ENCODE measurements at regions of chr10 and their contacts with region 1.

Region 1: DNA sequence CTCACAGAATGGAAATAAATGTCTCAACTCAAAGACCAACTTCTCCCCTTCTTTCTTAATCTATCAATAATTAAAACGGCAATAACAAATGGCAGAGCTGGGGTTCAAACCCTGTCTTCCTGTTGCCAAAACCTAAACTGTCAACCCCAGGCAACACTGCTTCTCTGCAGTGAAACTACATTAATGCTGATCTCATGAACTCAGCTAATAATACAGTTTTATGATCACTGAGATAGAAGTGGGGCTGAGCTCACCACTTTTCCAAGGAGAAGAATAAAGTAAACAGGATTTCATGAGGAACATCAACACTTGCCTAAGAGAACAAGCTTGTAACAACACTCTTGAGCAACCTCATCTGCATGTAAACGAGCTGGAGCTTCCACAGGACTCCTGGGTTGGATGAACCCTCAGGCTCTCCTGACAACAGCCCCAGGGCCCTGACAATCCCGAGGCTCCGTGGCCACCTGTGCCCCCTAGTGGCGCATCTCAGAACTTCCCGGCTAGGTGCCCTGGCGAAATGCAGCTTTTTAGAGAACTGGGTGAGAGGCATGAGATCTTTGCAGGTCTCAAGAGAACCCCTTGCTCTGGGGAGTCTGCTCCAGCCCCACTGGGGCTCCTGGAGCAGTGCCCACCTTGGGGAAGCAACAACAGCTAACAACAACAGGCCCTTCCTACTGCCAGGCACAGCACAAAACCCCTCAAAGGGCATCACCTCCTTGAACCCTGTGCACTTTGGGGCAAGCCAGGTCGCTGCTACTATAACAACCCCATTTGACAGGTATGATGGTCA is 169.3 kb downstream of the SH3PXD2A start:
- DNase-seq: peak; percentile 66 to 78 (median 71)
- H3K4me3 ChIP-seq: no peak overlapping the region
- H3K4me3 Mint-ChIP-seq: peak overlapping the region in 1 of 8 donors; percentile 61
- H3K27ac ChIP-seq: no peak overlapping the region
- H3K27ac Mint-ChIP-seq: peak overlapping the region in 5 of 7 donors; percentile 30 to 84 (median 74)
- H3K4me1 ChIP-seq: peaks cover under 1% of the 10 kb centered on the region
- H3K4me1 Mint-ChIP-seq: peaks cover 3 to 20% (median 5%) of the 10 kb centered on the region in 4 donors
- H3K27me3 ChIP-seq: no peaks in the 10 kb centered on the region
- H3K27me3 Mint-ChIP-seq: no peaks in the 10 kb centered on the region

Region 2: GRCh38 chr10:103542764-103543616 is 143.1 kb before region 1 on chr10:
- CTCF ChIA-PET with region 1: no interaction called
- POLR2A ChIA-PET with region 1: no interaction called
- intact Hi-C with region 1: loop called (anchors 5 kb)
- DNase-seq: peak; percentile 16 to 51 (median 25)
- H3K4me3 ChIP-seq: peak overlapping the region in 1 of 2 donors; percentile 23
- H3K4me3 Mint-ChIP-seq: peak overlapping the region; percentile 75 to 91 (median 85)
- H3K27ac ChIP-seq: no peak overlapping the region
- H3K27ac Mint-ChIP-seq: peak overlapping the region in 3 of 7 donors; percentile 3 to 36 (median 25)
- H3K4me1 ChIP-seq: peaks cover 9% of the 10 kb centered on the region
- H3K4me1 Mint-ChIP-seq: peaks cover 3 to 17% (median 8%) of the 10 kb centered on the region in 4 donors
- H3K27me3 ChIP-seq: peaks cover 5% of the 10 kb centered on the region
- H3K27me3 Mint-ChIP-seq: peaks cover 10 to 11% of the 10 kb centered on the region in 2 donors

Region 3: GRCh38 chr10:103605359-103606095 is 80.5 kb before region 1 on chr10:
- CTCF ChIA-PET with region 1: interaction called, 103 read pairs
- POLR2A ChIA-PET with region 1: no interaction called
- intact Hi-C with region 1: no loop called
- DNase-seq: peak; percentile 26 to 53 (median 44)
- H3K4me3 ChIP-seq: no peak overlapping the region
- H3K4me3 Mint-ChIP-seq: no peak overlapping the region
- H3K27ac ChIP-seq: no peak overlapping the region
- H3K27ac Mint-ChIP-seq: peak overlapping the region in 1 of 7 donors; percentile 57
- H3K4me1 ChIP-seq: no peaks in the 10 kb centered on the region
- H3K4me1 Mint-ChIP-seq: no peaks in the 10 kb centered on the region
- H3K27me3 ChIP-seq: no peaks in the 10 kb centered on the region
- H3K27me3 Mint-ChIP-seq: no peaks in the 10 kb centered on the region

Region 4: GRCh38 chr10:103648921-103649532 is 37.0 kb before region 1 on chr10:
- CTCF ChIA-PET with region 1: interaction called, 13 read pairs
- POLR2A ChIA-PET with region 1: no interaction called
- intact Hi-C with region 1: no loop called
- DNase-seq: no peak
- H3K4me3 ChIP-seq: no peak overlapping the region
- H3K4me3 Mint-ChIP-seq: no peak overlapping the region
- H3K27ac ChIP-seq: no peak overlapping the region
- H3K27ac Mint-ChIP-seq: no peak overlapping the region
- H3K4me1 ChIP-seq: no peaks in the 10 kb centered on the region
- H3K4me1 Mint-ChIP-seq: peaks cover 0 to 18% (median under 1%) of the 10 kb centered on the region in 4 donors
- H3K27me3 ChIP-seq: no peaks in the 10 kb centered on the region
- H3K27me3 Mint-ChIP-seq: no peaks in the 10 kb centered on the region

Region 5: DNA sequence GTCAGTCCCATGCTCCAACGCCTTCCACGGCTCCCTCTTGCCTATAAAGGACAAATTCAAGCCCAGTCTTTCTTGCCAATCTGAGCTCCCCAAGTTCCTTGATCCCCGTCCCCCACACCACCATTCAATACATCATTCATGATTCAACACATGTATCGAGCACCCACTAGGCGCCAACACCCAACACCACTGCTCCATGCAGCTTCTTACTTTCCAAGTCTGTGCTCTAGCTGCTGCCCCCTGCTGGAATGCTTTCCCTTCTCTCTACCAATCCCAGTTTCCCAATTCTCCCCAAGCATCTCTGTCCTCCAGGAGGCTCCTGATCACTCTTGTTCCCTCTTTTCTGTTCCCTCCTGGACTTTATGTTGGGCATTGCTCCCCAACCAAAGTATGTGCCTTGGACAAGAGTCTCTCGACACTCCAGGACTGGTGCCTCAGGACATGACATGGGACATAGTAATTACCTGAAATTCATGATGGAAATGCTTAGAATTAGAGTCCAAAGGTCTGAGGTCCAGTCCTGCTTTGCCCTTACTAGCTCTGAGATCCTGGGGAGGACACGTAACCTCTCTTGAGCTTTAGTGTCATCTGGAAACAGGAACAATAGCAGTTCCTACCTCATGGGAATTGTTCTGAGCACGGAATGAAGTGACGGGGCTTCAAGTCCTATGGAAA is 19.9 kb before region 1 on chr10:
- CTCF ChIA-PET with region 1: interaction called, 37 read pairs
- POLR2A ChIA-PET with region 1: interaction called, 3 read pairs
- intact Hi-C with region 1: no loop called
- DNase-seq: no peak
- H3K4me3 ChIP-seq: no peak overlapping the region
- H3K4me3 Mint-ChIP-seq: no peak overlapping the region
- H3K27ac ChIP-seq: no peak overlapping the region
- H3K27ac Mint-ChIP-seq: peak overlapping the region; percentile 4 to 95 (median 77)
- H3K4me1 ChIP-seq: peaks cover 19% of the 10 kb centered on the region
- H3K4me1 Mint-ChIP-seq: peaks cover 9 to 40% (median 18%) of the 10 kb centered on the region in 4 donors
- H3K27me3 ChIP-seq: no peaks in the 10 kb centered on the region
- H3K27me3 Mint-ChIP-seq: no peaks in the 10 kb centered on the region

Region 6: GRCh38 chr10:104045151-104046089 is 359.3 kb after region 1 on chr10:
- CTCF ChIA-PET with region 1: no interaction called
- POLR2A ChIA-PET with region 1: no interaction called
- intact Hi-C with region 1: no loop called
- DNase-seq: no peak
- H3K4me3 ChIP-seq: no peak overlapping the region
- H3K4me3 Mint-ChIP-seq: no peak overlapping the region
- H3K27ac ChIP-seq: no peak overlapping the region
- H3K27ac Mint-ChIP-seq: no peak overlapping the region
- H3K4me1 ChIP-seq: no peaks in the 10 kb centered on the region
- H3K4me1 Mint-ChIP-seq: no peaks in the 10 kb centered on the region
- H3K27me3 ChIP-seq: no peaks in the 10 kb centered on the region
- H3K27me3 Mint-ChIP-seq: no peaks in the 10 kb centered on the region